ENCODE measurements at regions of chr3 and their contacts with region 1.

Region 1: GRCh38 chr3:26712211-26713026 is 89.8 kb downstream of the LRRC3B start:
- DNase-seq: no peak
- ATAC-seq: peak in 2 of 4 donors; percentile 63 to 80
- H3K4me3 ChIP-seq: no peak overlapping the region
- H3K27ac ChIP-seq: no peak overlapping the region
- H3K4me1 ChIP-seq: no peaks in the 10 kb centered on the region
- H3K27me3 ChIP-seq: no peaks in the 10 kb centered on the region
- CTCF ChIP-seq: peak; percentile 74

Region 2: GRCh38 chr3:25648107-25648535 is 1064.3 kb before region 1 on chr3:
- intact Hi-C with region 1: loop called in 1 of 2 experiments (anchors 5 kb)
- DNase-seq: no peak
- ATAC-seq: peak; percentile 91 to 96 (median 94)
- H3K4me3 ChIP-seq: no peak overlapping the region
- H3K27ac ChIP-seq: no peak overlapping the region
- H3K4me1 ChIP-seq: peaks cover 13% of the 10 kb centered on the region
- H3K27me3 ChIP-seq: no peaks in the 10 kb centered on the region
- CTCF ChIP-seq: peak; percentile 93

Region 3: GRCh38 chr3:25664810-25665314 is 1047.6 kb before region 1 on chr3 and contains the start of gene TOP2B:
- intact Hi-C with region 1: loop called in 1 of 2 experiments (anchors 10 kb)
- DNase-seq: peak; percentile 96 to 98
- ATAC-seq: peak; percentile 98 to 100 (median 99)
- H3K4me3 ChIP-seq: peak within 1 kb of the TSS; percentile 83
- H3K27ac ChIP-seq: peak within 1 kb of the TSS; percentile 96
- H3K4me1 ChIP-seq: peaks cover 35% of the 10 kb centered on the region
- H3K27me3 ChIP-seq: no peaks in the 10 kb centered on the region
- CTCF ChIP-seq: no peak
- total RNA-seq, gene TOP2B: 50.6 to 84.8 (median 70.1) TPM

Region 4: GRCh38 chr3:25843332-25843731 is 869.1 kb before region 1 on chr3:
- intact Hi-C with region 1: loop called in 1 of 2 experiments (anchors 10 kb)
- DNase-seq: no peak
- ATAC-seq: no peak
- H3K4me3 ChIP-seq: no peak overlapping the region
- H3K27ac ChIP-seq: no peak overlapping the region
- H3K4me1 ChIP-seq: no peaks in the 10 kb centered on the region
- H3K27me3 ChIP-seq: no peaks in the 10 kb centered on the region
- CTCF ChIP-seq: peak; percentile 21

Region 5: DNA sequence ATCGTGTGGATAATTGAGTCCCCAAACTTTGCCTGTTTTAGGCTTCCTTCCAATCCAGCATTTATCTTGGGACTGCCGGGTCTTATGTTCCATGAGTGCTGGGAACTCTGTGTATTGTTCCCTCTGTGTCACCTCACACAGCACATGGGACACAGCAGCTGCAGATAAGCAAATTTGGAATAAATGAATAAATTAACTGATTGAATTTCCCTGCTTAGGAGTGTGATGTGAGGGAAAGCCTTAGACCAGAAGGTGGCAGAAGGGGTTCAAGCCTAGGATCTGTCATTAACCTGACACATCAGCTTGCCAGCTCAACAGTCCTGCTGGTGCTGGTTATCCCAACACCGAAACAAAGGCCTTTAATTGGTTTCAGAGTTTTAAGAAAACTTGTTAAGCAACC is 808.2 kb before region 1 on chr3:
- intact Hi-C with region 1: loop called (anchors 5 to 10 kb)
- DNase-seq: no peak
- ATAC-seq: peak in 2 of 4 donors; percentile 59 to 73
- H3K4me3 ChIP-seq: no peak overlapping the region
- H3K27ac ChIP-seq: no peak overlapping the region
- H3K4me1 ChIP-seq: no peaks in the 10 kb centered on the region
- H3K27me3 ChIP-seq: no peaks in the 10 kb centered on the region
- CTCF ChIP-seq: peak; percentile 40

Region 6: GRCh38 chr3:26522919-26523318 is 189.5 kb before region 1 on chr3:
- intact Hi-C with region 1: loop called in 1 of 2 experiments (anchors 10 kb)
- DNase-seq: no peak
- ATAC-seq: no peak
- H3K4me3 ChIP-seq: no peak overlapping the region
- H3K27ac ChIP-seq: no peak overlapping the region
- H3K4me1 ChIP-seq: no peaks in the 10 kb centered on the region
- H3K27me3 ChIP-seq: no peaks in the 10 kb centered on the region
- CTCF ChIP-seq: no peak

Measured in psoas muscle (tissue), 8 donors.